ENCODE measurements at regions of chr16 and their contacts with region 1.

Region 1: GRCh38 chr16:61306204-61306603 is 730.0 kb downstream of the CDH8 start:
- DNase-seq: no peak
- ATAC-seq: no peak
- H3K4me3 ChIP-seq: no peak overlapping the region
- H3K4me3 Mint-ChIP-seq: no peak overlapping the region
- H3K27ac ChIP-seq: no peak overlapping the region
- H3K27ac Mint-ChIP-seq: no peak overlapping the region
- H3K4me1 ChIP-seq: no peaks in the 10 kb centered on the region
- H3K4me1 Mint-ChIP-seq: no peaks in the 10 kb centered on the region
- H3K27me3 ChIP-seq: no peaks in the 10 kb centered on the region
- H3K27me3 Mint-ChIP-seq: no peaks in the 10 kb centered on the region
- CTCF ChIP-seq: no peak

Region 2: DNA sequence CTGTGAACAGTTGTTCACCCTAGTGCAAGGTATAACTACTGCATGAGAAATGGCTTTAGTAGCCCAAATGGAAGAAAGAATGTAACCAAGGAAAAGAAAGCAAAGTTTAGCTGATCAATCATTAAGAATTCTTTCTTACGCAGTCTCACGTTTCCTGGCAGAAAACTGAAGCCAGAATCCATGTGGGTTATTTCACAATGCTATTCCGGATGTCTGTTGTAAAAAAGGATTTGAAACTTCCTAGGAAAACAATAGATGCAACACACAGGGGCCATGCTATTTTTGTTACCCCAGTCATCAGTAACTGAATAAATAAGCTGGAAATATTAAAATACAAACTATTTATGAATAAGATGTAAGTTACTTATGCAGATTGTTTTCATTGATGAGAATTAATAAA is 72.5 kb before region 1 on chr16:
- intact Hi-C with region 1: no loop called
- DNase-seq: no peak
- ATAC-seq: no peak
- H3K4me3 ChIP-seq: no peak overlapping the region
- H3K4me3 Mint-ChIP-seq: no peak overlapping the region
- H3K27ac ChIP-seq: no peak overlapping the region
- H3K27ac Mint-ChIP-seq: no peak overlapping the region
- H3K4me1 ChIP-seq: no peaks in the 10 kb centered on the region
- H3K4me1 Mint-ChIP-seq: no peaks in the 10 kb centered on the region
- H3K27me3 ChIP-seq: no peaks in the 10 kb centered on the region
- H3K27me3 Mint-ChIP-seq: no peaks in the 10 kb centered on the region
- CTCF ChIP-seq: no peak

Region 3: DNA sequence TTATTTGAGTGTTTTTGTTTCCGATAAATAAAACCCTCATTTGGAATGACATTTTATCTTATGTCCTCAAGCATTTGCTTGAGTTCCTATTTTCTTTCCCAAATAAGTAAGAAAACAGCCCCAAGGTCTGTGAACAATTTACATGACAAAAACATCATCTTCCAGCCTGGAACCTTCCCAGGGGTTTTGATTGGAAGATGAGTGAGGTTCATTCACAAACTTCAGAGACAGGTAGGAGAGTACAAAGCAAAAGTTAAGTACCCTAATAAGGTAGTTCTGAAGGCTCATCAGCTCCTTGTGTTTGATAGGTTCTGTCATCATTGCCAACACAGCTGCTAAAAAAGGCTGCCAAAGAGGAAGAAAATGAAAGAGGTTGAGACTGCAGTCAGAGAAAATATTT is 42.8 kb before region 1 on chr16:
- intact Hi-C with region 1: loop called (anchors 10 kb)
- DNase-seq: no peak
- ATAC-seq: no peak
- H3K4me3 ChIP-seq: no peak overlapping the region
- H3K4me3 Mint-ChIP-seq: no peak overlapping the region
- H3K27ac ChIP-seq: no peak overlapping the region
- H3K27ac Mint-ChIP-seq: no peak overlapping the region
- H3K4me1 ChIP-seq: no peaks in the 10 kb centered on the region
- H3K4me1 Mint-ChIP-seq: no peaks in the 10 kb centered on the region
- H3K27me3 ChIP-seq: no peaks in the 10 kb centered on the region
- H3K27me3 Mint-ChIP-seq: no peaks in the 10 kb centered on the region
- CTCF ChIP-seq: no peak